ENCODE measurements at regions of chr6 and their contacts with region 1.

Region 1: DNA sequence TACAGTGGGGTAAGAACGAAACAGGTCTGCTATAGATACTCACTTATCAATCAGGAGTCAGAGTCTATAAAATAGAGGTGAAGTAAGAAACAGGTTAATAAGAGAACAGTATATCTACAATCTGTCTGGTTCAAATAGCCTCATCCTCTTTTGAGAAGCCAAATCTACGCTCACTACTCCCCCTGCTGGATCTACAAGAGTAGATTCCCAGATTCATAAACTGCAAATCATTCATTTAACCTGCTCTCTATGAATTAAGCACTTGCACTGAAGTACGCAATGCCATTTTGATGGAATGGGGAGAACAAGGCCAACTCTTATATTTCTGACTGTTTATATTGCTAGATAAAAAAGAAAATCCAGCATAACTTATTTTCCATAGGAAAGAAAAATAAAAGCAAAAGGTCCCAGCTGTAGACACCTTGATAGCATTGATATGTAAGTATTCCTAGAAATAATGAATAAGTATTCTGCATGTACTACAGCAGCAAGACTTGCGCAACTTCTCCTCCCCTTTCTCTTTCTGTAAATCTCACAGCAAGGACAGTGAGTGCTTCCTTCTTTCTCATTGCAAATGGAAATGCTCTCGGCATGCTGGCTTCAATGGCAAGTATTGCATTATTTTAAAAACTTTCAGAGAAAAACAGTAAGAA is 92.3 kb downstream of the RFX6 start:
- DNase-seq: no peak
- ATAC-seq: peak in 3 of 4 donors; percentile 18 to 71 (median 69)
- H3K4me3 ChIP-seq: no peak overlapping the region
- H3K27ac ChIP-seq: no peak overlapping the region
- H3K4me1 ChIP-seq: peaks cover 16% of the 10 kb centered on the region
- H3K27me3 ChIP-seq: no peaks in the 10 kb centered on the region
- CTCF ChIP-seq: peak; percentile 70

Region 2: GRCh38 chr6:116217069-116217468 is 752.3 kb before region 1 on chr6:
- intact Hi-C with region 1: loop called in 1 of 2 experiments (anchors 10 kb)
- DNase-seq: no peak
- ATAC-seq: peak in 2 of 4 donors; percentile 66 to 81
- H3K4me3 ChIP-seq: no peak overlapping the region
- H3K27ac ChIP-seq: no peak overlapping the region
- H3K4me1 ChIP-seq: peaks cover 13% of the 10 kb centered on the region
- H3K27me3 ChIP-seq: no peaks in the 10 kb centered on the region
- CTCF ChIP-seq: peak; percentile 54

Region 3: GRCh38 chr6:116858060-116858459 is 111.3 kb before region 1 on chr6:
- intact Hi-C with region 1: no loop called
- DNase-seq: no peak
- ATAC-seq: no peak
- H3K4me3 ChIP-seq: no peak overlapping the region
- H3K27ac ChIP-seq: no peak overlapping the region
- H3K4me1 ChIP-seq: no peaks in the 10 kb centered on the region
- H3K27me3 ChIP-seq: no peaks in the 10 kb centered on the region
- CTCF ChIP-seq: no peak

Region 4: GRCh38 chr6:117167520-117168271 is 198.4 kb after region 1 on chr6:
- intact Hi-C with region 1: loop called in 1 of 2 experiments (anchors 10 kb)
- DNase-seq: peak; percentile 37 to 61
- ATAC-seq: peak; percentile 94 to 97 (median 95)
- H3K4me3 ChIP-seq: no peak overlapping the region
- H3K27ac ChIP-seq: peak overlapping the region; percentile 80
- H3K4me1 ChIP-seq: peaks cover 22% of the 10 kb centered on the region
- H3K27me3 ChIP-seq: no peaks in the 10 kb centered on the region
- CTCF ChIP-seq: no peak

Region 5: DNA sequence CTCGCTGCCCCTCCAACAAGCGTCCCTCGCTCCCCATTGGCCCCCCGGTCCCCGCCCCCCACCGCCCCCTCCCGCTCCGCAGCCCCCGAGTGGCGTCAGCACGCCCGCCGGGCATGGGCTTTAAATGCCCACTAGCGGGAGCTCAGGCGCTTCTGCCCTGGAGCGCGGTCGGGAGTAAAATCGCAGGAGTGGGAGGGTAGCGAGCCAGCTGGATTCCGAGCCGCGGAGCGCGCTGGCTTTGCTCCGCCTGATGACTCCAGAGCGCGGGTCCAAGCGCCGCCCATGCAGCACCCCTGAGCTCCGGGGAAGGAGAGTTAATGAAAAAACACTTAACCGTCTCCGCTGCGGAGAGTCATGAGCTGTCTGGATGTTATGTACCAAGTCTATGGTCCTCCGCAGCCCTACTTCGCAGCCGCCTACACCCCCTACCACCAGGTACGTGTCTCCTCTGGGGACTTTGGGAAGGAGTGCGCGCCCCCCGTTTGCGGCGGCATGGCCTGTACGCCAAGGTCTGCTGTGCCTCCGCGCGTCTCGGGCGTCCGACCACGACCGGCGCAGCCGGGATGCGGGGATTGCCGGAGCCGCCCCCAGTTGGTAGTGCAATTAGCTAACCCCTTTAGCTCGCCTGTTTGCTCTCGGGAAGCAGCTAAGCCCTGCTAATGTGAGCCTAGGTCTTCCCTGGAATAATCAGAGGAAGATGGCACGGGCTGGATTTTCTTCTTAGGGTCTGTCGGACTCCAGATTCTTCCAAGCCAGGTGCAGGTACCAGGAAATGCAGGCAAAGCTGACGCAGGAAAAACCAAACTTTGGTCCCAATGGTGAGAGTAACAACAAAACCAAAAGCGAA is 296.3 kb after region 1 on chr6 and contains the start of gene VGLL2:
- intact Hi-C with region 1: loop called (anchors 2 to 5 kb)
- DNase-seq: peak; percentile 79 to 94
- ATAC-seq: peak; percentile 85 to 92 (median 88)
- H3K4me3 ChIP-seq: peak within 1 kb of the TSS; percentile 90
- H3K27ac ChIP-seq: peak within 1 kb of the TSS; percentile 95
- H3K4me1 ChIP-seq: peaks cover 23% of the 10 kb centered on the region
- H3K27me3 ChIP-seq: peaks cover 0 to 7% (median 3%) of the 10 kb centered on the region in 3 donors
- CTCF ChIP-seq: peak; percentile 41
- total RNA-seq, gene VGLL2: 60.2 to 108 (median 83.4) TPM

Region 6: GRCh38 chr6:117602151-117602898 is 633.0 kb after region 1 on chr6 and contains the start of gene GOPC:
- intact Hi-C with region 1: loop called in 1 of 2 experiments (anchors 10 kb)
- DNase-seq: peak; percentile 95 to 98
- ATAC-seq: peak; percentile 99
- H3K4me3 ChIP-seq: peak within 1 kb of the TSS; percentile 89
- H3K27ac ChIP-seq: peak within 1 kb of the TSS; percentile 96
- H3K4me1 ChIP-seq: peaks cover 28% of the 10 kb centered on the region
- H3K27me3 ChIP-seq: no peaks in the 10 kb centered on the region
- CTCF ChIP-seq: no peak
- total RNA-seq, gene GOPC: 11.5 to 18.2 (median 15.6) TPM

Measured in psoas muscle (tissue), 8 donors.